ENCODE measurements at regions of chr17 and their contacts with region 1.

Region 1: DNA sequence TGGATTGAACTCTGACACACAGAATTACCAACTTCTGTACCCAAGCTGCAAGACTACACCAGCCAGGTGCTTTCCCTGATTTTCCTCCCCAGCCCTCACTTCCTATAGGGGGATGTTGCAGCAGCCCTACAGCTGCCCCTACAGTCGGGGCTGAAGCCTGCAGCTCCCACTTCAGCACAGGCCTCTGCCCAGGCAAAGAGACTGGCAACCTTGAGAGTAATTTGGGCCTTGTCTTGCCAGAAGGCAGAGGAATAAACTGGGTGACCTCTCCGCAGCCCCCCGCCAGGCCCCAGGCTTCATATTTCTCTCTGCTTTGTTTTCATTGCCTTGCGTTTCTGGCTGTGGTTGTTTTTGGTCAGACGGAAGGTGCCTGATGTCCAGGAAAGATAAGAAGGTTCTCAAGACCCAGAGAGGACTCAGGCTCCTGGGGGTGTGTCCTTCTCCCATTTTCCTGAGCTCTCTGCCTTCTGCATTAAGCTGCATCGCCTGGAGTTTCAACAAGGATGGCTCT is 32.0 kb downstream of the SLC6A4 start:
- DNase-seq: no peak
- ATAC-seq: peak; percentile 70; the same call in 1 of the 2 replicates
- H3K4me3 ChIP-seq: no peak overlapping the region
- H3K27ac ChIP-seq: no peak overlapping the region
- H3K4me1 ChIP-seq: no peaks in the 10 kb centered on the region
- H3K27me3 ChIP-seq: no peaks in the 10 kb centered on the region
- CTCF ChIP-seq: no peak

Region 2: DNA sequence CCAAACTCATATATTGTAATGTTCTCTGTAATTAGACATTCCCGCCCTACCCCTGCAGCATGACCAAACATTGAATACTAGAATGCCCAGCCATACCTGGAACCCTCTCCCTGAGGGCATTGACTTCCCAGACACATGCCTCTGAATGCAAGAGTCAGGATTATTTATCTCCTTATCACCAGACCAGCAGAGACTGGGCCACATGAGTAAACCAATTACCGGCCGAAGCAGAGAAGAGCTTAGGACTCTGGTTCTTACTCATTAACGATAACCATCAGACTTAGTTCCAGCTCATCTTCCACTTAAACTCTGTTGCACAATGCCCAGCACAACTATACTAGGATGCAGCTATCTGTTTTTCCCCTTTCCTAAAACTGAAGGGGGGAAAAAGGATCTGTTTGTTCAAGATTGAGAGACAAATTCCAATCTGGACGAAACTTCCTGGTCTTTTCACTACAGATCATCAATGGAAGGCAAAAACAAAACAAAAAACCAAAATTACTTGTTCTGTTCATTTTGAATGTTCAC is 492.6 kb before region 1 on chr17:
- CTCF ChIA-PET with region 1: no interaction called
- POLR2A ChIA-PET with region 1: no interaction called
- in situ Hi-C with region 1: no loop called
- intact Hi-C with region 1: no loop called
- DNase-seq: no peak
- ATAC-seq: no peak
- H3K4me3 ChIP-seq: no peak overlapping the region
- H3K27ac ChIP-seq: 0 out of 2 replicates have a peak overlapping the region, but pooled peaks have one; percentile 3
- H3K4me1 ChIP-seq: peaks cover 16% of the 10 kb centered on the region
- H3K27me3 ChIP-seq: no peaks in the 10 kb centered on the region
- CTCF ChIP-seq: no peak

Region 3: GRCh38 chr17:30187573-30187972 is 16.0 kb before region 1 on chr17:
- CTCF ChIA-PET with region 1: no interaction called
- POLR2A ChIA-PET with region 1: interaction called, 13 read pairs
- in situ Hi-C with region 1: no loop called
- intact Hi-C with region 1: no loop called
- DNase-seq: no peak
- ATAC-seq: no peak
- H3K4me3 ChIP-seq: no peak overlapping the region
- H3K27ac ChIP-seq: no peak overlapping the region
- H3K4me1 ChIP-seq: no peaks in the 10 kb centered on the region
- H3K27me3 ChIP-seq: no peaks in the 10 kb centered on the region
- CTCF ChIP-seq: no peak

Region 4: GRCh38 chr17:30273373-30273772 is 69.8 kb after region 1 on chr17:
- CTCF ChIA-PET with region 1: no interaction called
- POLR2A ChIA-PET with region 1: no interaction called
- in situ Hi-C with region 1: no loop called
- intact Hi-C with region 1: no loop called
- DNase-seq: no peak
- ATAC-seq: no peak
- H3K4me3 ChIP-seq: no peak overlapping the region
- H3K27ac ChIP-seq: no peak overlapping the region
- H3K4me1 ChIP-seq: no peaks in the 10 kb centered on the region
- H3K27me3 ChIP-seq: no peaks in the 10 kb centered on the region
- CTCF ChIP-seq: no peak

Measured in Panc1 (cell line).